B cell (primary cell): ENCODE measurements at regions of chr19 and their contacts with region 1.

Region 1: DNA sequence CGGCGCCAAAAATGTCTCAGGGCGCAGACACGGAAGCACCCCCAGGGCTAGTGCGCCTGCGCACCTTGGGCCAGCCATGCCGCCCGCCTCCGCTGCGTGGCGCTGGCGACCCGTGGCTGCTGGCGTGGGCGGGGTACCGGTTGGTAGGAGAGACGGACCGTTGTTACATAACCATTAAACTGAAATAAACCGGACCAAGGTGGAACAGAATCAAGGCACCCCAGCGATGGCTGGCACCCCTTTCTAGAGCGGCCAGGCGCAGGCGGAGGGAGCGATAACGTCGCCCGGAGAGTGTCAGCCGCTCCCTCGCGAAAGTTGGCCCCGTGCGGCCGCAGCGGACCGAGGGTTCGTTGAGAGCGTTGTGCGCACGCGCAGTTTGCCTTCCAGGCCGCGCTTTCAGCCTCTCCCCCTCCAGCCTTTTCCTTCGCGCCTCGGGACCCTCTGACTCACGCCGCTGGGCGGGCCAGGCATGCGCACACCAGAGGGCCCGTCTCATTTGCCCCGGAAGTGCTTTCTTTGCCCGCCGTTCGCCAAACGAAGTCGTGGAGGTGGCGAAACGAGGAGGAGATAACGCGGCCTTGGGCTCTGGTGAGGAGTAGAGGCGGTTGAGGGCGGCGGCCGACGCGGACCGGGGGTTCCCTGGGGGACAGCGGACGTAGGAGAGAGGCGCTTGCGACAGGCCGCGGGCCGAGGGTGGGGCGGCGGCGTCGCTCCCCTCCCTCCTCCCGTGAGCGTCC is at the starts of genes PLEKHJ1 and SF3A2:
- DNase-seq: peak; percentile 99
- ATAC-seq: peak; percentile 83
- H3K4me3 ChIP-seq: peak within 1 kb of the TSS; percentile 19 to 94 (median 70)
- H3K4me3 Mint-ChIP-seq: peak within 1 kb of the TSS; percentile 93
- H3K27ac ChIP-seq: peak within 1 kb of the TSS; percentile 97 to 99
- H3K27ac Mint-ChIP-seq: peak within 1 kb of the TSS; percentile 98
- H3K4me1 ChIP-seq: peaks cover 46 to 66% of the 10 kb centered on the region in 2 donors
- H3K4me1 Mint-ChIP-seq: peaks cover 65% of the 10 kb centered on the region
- H3K27me3 ChIP-seq: no peaks in the 10 kb centered on the region
- H3K27me3 Mint-ChIP-seq: no peaks in the 10 kb centered on the region
- CTCF ChIP-seq: peak; percentile 98
- total RNA-seq, gene PLEKHJ1: 82.4 and 86.7 TPM in 2 replicates
- total RNA-seq, gene SF3A2: 129 and 140 TPM in 2 replicates

Region 2: DNA sequence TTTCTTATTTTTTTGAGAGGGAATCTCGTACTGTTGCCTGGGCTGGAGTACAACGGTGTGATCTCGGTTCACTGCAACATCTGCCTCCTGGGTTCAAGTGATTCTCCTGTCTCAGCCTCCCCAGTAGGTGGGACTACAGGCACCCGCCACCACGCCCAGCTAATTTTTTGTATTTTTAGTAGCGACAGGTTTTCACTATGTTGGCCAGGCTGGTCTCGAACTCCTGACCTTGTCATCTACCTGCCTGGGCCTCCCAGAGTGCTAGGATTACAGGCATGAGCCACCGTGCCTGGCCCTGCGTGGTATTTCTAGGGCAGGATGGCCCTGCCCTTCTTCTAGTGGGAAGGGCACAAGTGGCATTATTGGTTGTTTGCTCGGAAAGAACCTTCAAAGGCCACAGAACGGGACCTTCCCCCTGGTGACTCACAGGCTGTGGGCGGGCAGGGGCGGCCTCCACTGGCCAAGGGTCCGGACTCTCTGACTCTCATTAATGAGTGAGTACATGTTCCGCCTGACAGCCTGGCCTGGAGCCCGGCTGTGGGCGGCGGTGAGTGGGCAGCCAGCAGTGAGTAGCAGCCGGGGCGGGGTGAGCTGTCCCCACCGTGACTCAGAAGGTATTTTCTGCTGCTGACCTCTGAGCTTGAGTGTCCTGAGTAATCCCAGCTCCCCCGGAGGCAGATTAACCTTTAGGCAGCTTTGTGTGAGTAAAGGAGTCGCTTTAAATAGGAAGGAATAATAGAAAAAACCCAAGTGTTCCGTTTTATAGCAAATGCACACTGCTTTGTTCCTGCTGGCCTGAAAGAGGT is 67.7 kb before region 1 on chr19:
- CTCF ChIA-PET with region 1: interaction called, 6 read pairs
- POLR2A ChIA-PET with region 1: interaction called, 9 read pairs
- intact Hi-C with region 1: loop called (anchors 2 kb)
- DNase-seq: peak; percentile 81
- ATAC-seq: peak; percentile 44
- H3K4me3 ChIP-seq: peak overlapping the region; percentile 16 to 64 (median 37)
- H3K4me3 Mint-ChIP-seq: peak overlapping the region; percentile 88
- H3K27ac ChIP-seq: peak overlapping the region; percentile 90 to 95
- H3K27ac Mint-ChIP-seq: peak overlapping the region; percentile 95
- H3K4me1 ChIP-seq: peaks cover 66 to 88% of the 10 kb centered on the region in 2 donors
- H3K4me1 Mint-ChIP-seq: peaks cover 69% of the 10 kb centered on the region
- H3K27me3 ChIP-seq: no peaks in the 10 kb centered on the region
- H3K27me3 Mint-ChIP-seq: no peaks in the 10 kb centered on the region
- CTCF ChIP-seq: no peak

Region 3: GRCh38 chr19:2253106-2254053 is 16.9 kb after region 1 on chr19:
- CTCF ChIA-PET with region 1: interaction called, 31 read pairs
- POLR2A ChIA-PET with region 1: interaction called, 17 read pairs
- intact Hi-C with region 1: loop called (anchors 1 kb)
- DNase-seq: peak; percentile 77
- ATAC-seq: peak; percentile 40
- H3K4me3 ChIP-seq: peak overlapping the region; percentile 30 to 70 (median 55)
- H3K4me3 Mint-ChIP-seq: peak overlapping the region; percentile 88
- H3K27ac ChIP-seq: no peak overlapping the region
- H3K27ac Mint-ChIP-seq: peak overlapping the region; percentile 65
- H3K4me1 ChIP-seq: peaks cover 54 to 68% of the 10 kb centered on the region in 2 donors
- H3K4me1 Mint-ChIP-seq: peaks cover 43% of the 10 kb centered on the region
- H3K27me3 ChIP-seq: peaks cover 0 to 38% (median 14%) of the 10 kb centered on the region in 4 experiments
- H3K27me3 Mint-ChIP-seq: no peaks in the 10 kb centered on the region
- CTCF ChIP-seq: peak; percentile 63

Region 4: GRCh38 chr19:2269244-2269947 is 32.9 kb after region 1 on chr19:
- CTCF ChIA-PET with region 1: interaction called, 25 read pairs
- POLR2A ChIA-PET with region 1: interaction called, 8 read pairs
- intact Hi-C with region 1: loop called (anchors 1 kb)
- DNase-seq: peak; percentile 99
- ATAC-seq: peak; percentile 66
- H3K4me3 ChIP-seq: peak overlapping the region; percentile 59 to 100 (median 99)
- H3K4me3 Mint-ChIP-seq: peak overlapping the region; percentile 89
- H3K27ac ChIP-seq: peak overlapping the region; percentile 79 to 94
- H3K27ac Mint-ChIP-seq: peak overlapping the region; percentile 97
- H3K4me1 ChIP-seq: peaks cover 56 to 66% of the 10 kb centered on the region in 2 donors
- H3K4me1 Mint-ChIP-seq: peaks cover 52% of the 10 kb centered on the region
- H3K27me3 ChIP-seq: no peaks in the 10 kb centered on the region
- H3K27me3 Mint-ChIP-seq: no peaks in the 10 kb centered on the region
- CTCF ChIP-seq: no peak

Region 5: DNA sequence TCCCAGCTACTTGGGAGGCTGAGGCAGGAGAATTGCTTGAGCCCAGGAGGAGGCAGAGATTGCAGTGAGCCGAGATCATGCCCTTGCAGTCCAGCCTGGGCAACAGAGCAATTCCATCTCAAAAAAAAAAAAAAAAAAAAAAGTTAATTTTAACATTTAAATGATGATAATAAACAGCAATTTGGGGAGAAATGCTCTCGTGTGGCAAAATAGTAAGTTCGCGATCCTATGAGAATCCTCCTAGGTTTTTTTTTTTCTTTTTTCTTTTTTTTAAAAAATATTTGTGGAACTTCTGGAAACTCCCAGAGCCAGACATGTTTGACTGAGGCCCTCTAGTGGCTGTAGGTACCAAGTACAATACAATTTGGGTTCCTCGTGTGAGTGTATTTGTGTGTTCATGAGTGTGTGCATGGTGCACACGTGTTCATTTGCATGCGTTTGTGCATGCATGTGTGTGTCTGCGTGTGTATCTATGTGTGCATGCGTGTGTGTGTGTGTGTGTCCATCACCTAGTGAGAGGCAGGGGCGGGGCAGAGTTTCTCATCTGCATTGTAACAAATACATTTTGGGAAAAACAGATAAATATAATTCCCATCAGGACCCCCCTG is 154.7 kb after region 1 on chr19:
- CTCF ChIA-PET with region 1: interaction called, 12 read pairs
- POLR2A ChIA-PET with region 1: interaction called, 5 read pairs
- intact Hi-C with region 1: loop called (anchors 1 kb)
- DNase-seq: peak; percentile 82
- ATAC-seq: peak; percentile 51
- H3K4me3 ChIP-seq: no peak overlapping the region
- H3K4me3 Mint-ChIP-seq: peak overlapping the region; percentile 61
- H3K27ac ChIP-seq: no peak overlapping the region
- H3K27ac Mint-ChIP-seq: peak overlapping the region; percentile 70
- H3K4me1 ChIP-seq: peaks cover 16 to 31% of the 10 kb centered on the region in 2 donors
- H3K4me1 Mint-ChIP-seq: peaks cover 32% of the 10 kb centered on the region
- H3K27me3 ChIP-seq: no peaks in the 10 kb centered on the region
- H3K27me3 Mint-ChIP-seq: no peaks in the 10 kb centered on the region
- CTCF ChIP-seq: peak; percentile 92

Region 6: GRCh38 chr19:2455851-2456570 is 219.5 kb after region 1 on chr19:
- CTCF ChIA-PET with region 1: no interaction called
- POLR2A ChIA-PET with region 1: no interaction called
- intact Hi-C with region 1: loop called (anchors 2 kb)
- DNase-seq: peak; percentile 73
- ATAC-seq: peak; percentile 34
- H3K4me3 ChIP-seq: peak overlapping the region; percentile 48 to 81 (median 76)
- H3K4me3 Mint-ChIP-seq: peak overlapping the region; percentile 84
- H3K27ac ChIP-seq: peak overlapping the region in 1 of 2 donors; percentile 73
- H3K27ac Mint-ChIP-seq: peak overlapping the region; percentile 63
- H3K4me1 ChIP-seq: peaks cover 7 to 26% of the 10 kb centered on the region in 2 donors
- H3K4me1 Mint-ChIP-seq: peaks cover 24% of the 10 kb centered on the region
- H3K27me3 ChIP-seq: no peaks in the 10 kb centered on the region
- H3K27me3 Mint-ChIP-seq: peaks cover under 1% of the 10 kb centered on the region
- CTCF ChIP-seq: no peak